Ovary (tissue), 10 donors: ENCODE measurements at regions of chr7 and their contacts with region 1.

Region 1: GRCh38 chr7:125857606-125858005 is 928.0 kb upstream of the POT1 start:
- DNase-seq: no peak
- H3K4me3 ChIP-seq: no peak overlapping the region
- H3K27ac ChIP-seq: no peak overlapping the region
- H3K4me1 ChIP-seq: no peaks in the 10 kb centered on the region
- H3K27me3 ChIP-seq: no peaks in the 10 kb centered on the region
- CTCF ChIP-seq: no peak
- EP300 ChIP-seq: no peak
- POLR2A ChIP-seq: no peak

Region 2: DNA sequence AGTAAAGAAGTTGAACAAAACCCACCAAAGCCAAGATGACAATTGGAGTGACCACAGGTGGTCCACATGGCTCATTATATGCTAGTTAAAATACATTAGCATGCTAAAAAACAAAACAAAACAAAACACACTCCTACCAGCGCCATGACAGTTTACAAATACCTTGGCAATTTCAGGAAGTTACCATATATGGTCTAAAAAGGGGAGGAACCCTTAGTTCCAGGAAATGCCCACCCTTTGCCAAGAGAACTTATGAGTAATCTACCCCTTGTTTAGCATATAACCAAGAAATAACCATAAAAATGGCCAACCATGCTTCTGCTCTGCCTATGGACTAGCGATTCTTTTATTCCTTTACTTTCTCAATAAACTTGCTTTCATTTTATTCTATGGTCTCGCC is 51.1 kb after region 1 on chr7:
- intact Hi-C with region 1: loop called in 1 of 4 experiments (anchors 5 kb)
- DNase-seq: no peak
- H3K4me3 ChIP-seq: no peak overlapping the region
- H3K27ac ChIP-seq: no peak overlapping the region
- H3K4me1 ChIP-seq: no peaks in the 10 kb centered on the region
- H3K27me3 ChIP-seq: no peaks in the 10 kb centered on the region
- CTCF ChIP-seq: no peak
- EP300 ChIP-seq: no peak
- POLR2A ChIP-seq: no peak

Region 3: DNA sequence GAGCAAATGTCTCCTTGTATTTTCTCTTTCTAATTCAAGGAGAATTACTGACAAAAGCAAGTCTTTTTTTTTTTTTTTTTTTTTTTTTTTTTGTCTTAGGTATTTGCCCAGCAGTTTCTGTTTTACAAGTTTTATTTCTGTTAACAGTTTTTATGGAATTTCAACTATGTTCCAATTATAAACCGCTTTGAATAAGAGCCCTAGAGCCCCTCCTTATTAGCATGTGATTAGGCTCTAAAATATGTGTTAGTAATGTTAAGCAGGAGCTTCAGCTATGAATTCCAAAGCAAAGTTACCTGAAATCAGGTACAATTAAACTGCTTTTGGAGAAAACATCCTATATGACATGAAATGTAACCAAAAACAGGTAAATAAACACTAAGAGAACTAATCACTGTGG is 69.0 kb after region 1 on chr7:
- intact Hi-C with region 1: no loop called
- DNase-seq: no peak
- H3K4me3 ChIP-seq: no peak overlapping the region
- H3K27ac ChIP-seq: no peak overlapping the region
- H3K4me1 ChIP-seq: no peaks in the 10 kb centered on the region
- H3K27me3 ChIP-seq: no peaks in the 10 kb centered on the region
- CTCF ChIP-seq: no peak
- EP300 ChIP-seq: no peak
- POLR2A ChIP-seq: no peak